ENCODE measurements at regions of chr21 and their contacts with region 1.

Region 1: GRCh38 chr21:36104317-36105300 is 30.3 kb upstream of the CBR3 start:
- DNase-seq: peak; percentile 69
- ATAC-seq: peak; percentile 63
- H3K4me3 Mint-ChIP-seq: peak overlapping the region; percentile 64
- H3K27ac Mint-ChIP-seq: peak overlapping the region; percentile 65
- H3K4me1 Mint-ChIP-seq: peaks cover 15% of the 10 kb centered on the region
- H3K27me3 Mint-ChIP-seq: peaks cover 31% of the 10 kb centered on the region

Region 2: DNA sequence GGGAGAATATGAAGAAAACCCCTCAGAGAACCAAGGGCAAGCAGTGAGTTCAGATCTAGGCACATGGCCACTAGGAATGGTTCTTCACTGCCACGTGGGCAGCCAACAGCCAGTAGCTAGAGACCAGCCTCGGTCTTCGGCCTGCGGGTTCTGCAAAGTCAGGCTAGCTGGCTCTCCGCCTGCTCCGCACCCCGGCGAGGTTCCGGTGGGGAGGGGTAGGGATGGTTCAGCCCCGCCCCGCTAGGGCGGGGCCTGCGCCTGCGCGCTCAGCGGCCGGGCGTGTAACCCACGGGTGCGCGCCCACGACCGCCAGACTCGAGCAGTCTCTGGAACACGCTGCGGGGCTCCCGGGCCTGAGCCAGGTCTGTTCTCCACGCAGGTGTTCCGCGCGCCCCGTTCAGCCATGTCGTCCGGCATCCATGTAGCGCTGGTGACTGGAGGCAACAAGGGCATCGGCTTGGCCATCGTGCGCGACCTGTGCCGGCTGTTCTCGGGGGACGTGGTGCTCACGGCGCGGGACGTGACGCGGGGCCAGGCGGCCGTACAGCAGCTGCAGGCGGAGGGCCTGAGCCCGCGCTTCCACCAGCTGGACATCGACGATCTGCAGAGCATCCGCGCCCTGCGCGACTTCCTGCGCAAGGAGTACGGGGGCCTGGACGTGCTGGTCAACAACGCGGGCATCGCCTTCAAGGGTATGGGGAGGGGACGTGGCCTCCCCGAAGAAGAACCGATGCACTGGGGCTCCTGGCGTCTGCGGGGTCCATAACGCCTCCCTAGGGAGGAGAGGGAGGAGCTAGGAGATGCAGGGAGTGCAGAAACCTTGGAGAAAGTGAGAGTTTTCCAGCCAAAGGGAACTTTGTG is 34.7 kb before region 1 on chr21 and contains the start of gene CBR1:
- CTCF ChIA-PET with region 1: interaction called, 3 read pairs
- POLR2A ChIA-PET with region 1: no interaction called
- intact Hi-C with region 1: loop called in 1 of 2 experiments (anchors 1 kb)
- DNase-seq: peak; percentile 94
- ATAC-seq: peak; percentile 98
- H3K4me3 Mint-ChIP-seq: peak within 1 kb of the TSS; percentile 83
- H3K27ac Mint-ChIP-seq: peak within 1 kb of the TSS; percentile 88
- H3K4me1 Mint-ChIP-seq: peaks cover 41% of the 10 kb centered on the region
- H3K27me3 Mint-ChIP-seq: no peaks in the 10 kb centered on the region
- total RNA-seq, gene CBR1: 48.6 to 54.1 TPM

Region 3: GRCh38 chr21:36079010-36079649 is 25.5 kb before region 1 on chr21:
- CTCF ChIA-PET with region 1: interaction called, 4 read pairs
- POLR2A ChIA-PET with region 1: no interaction called
- intact Hi-C with region 1: loop called in 1 of 2 experiments (anchors 2 kb)
- DNase-seq: peak; percentile 70
- ATAC-seq: peak; percentile 92
- H3K4me3 Mint-ChIP-seq: peak overlapping the region; percentile 64
- H3K27ac Mint-ChIP-seq: peak overlapping the region; percentile 96
- H3K4me1 Mint-ChIP-seq: peaks cover 34% of the 10 kb centered on the region
- H3K27me3 Mint-ChIP-seq: no peaks in the 10 kb centered on the region